ENCODE measurements at regions of chr18 and their contacts with region 1.

Region 1: DNA sequence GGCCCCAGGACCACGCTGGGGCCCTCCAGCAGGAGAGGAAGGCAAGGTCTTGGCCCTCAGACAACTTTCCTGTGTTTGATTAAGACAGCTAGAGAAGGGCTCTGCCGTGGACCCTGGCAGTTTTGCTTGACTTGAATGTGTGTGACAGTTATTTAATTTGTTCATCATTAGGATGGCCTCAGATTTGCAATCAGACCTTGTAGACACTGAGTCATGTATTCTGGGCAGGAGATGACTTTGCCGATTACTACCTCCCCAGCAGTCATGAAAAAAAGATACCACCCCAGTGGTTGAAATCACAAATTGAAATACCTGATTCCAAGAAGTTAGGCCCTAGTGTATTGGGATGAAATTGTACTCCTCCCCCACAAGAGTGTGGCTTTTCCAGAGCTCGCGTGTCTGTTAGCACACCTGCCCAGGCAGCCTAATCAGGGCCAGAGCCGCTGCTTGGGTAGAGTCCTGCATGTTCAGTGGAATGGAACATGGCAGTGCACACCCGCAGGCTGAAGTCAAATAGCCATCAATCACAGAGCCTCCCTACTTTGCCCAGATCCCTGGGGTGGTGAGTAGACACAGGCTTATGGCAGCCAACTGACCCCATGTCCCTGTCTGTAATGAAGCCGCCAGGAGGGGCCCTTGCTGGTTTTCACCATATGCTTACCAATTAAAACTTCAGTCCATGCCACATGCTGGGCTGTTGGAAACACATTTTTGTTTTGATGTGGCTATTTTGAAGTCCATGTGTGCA is 122.5 kb downstream of the TPGS2 start:
- DNase-seq: no peak
- ATAC-seq: no peak
- H3K4me3 ChIP-seq: no peak overlapping the region
- H3K27ac ChIP-seq: no peak overlapping the region
- H3K4me1 ChIP-seq: no peaks in the 10 kb centered on the region
- H3K27me3 ChIP-seq: no peaks in the 10 kb centered on the region
- CTCF ChIP-seq: no peak
- POLR2A ChIP-seq: no peak

Region 2: DNA sequence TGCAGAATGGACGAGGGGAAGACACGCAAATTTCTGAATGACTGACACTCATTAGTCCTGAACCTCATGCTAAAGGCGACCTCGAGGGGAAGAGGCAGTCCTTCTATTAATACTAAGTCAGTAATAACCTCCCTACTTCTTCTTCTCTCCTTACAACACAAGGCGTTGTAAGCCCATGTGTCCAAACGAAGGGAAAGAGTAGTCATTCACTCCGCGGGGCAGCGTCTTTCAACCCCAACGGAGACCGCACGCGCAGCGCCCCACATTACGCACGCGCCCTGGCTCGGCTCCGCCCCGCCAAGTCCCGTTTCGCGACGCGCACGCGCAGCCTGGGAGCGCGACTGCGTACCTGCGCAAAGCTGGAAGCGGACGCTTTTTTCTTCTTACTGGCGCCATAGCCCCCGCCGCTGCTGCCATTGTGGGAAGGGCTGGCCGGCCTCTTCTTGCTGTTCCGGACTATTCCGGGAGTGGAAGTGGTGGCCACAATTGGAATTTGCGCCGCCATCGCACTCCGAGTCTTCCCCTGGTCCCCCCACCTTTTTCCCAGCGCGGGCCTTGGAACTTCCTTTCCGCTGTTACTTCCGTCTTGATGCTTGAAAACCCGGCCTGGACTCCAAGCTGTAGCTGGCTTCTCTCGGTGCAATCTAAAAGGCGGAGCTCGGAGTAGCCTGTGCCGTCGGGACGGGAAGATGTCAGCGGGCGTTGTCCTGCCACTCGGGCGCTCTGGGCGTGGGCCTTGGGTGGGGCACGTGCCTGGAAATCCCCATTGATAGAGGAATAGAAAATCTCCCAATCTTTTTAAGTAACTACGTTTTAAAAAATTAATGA is 1208.7 kb before region 1 on chr18 and contains the start of gene INO80C:
- intact Hi-C with region 1: no loop called
- DNase-seq: peak; percentile 93 to 94 (median 94)
- ATAC-seq: peak; percentile 96 to 98 (median 96)
- H3K4me3 ChIP-seq: peak within 1 kb of the TSS; percentile 45 to 76 (median 70)
- H3K27ac ChIP-seq: peak within 1 kb of the TSS; percentile 90 to 95 (median 94)
- H3K4me1 ChIP-seq: peaks cover 0 to 13% (median 4%) of the 10 kb centered on the region in 4 donors
- H3K27me3 ChIP-seq: no peaks in the 10 kb centered on the region
- CTCF ChIP-seq: peak in 1 of 4 donors; percentile 13
- POLR2A ChIP-seq: peak; percentile 98
- total RNA-seq, gene INO80C: 6.4 to 12.7 (median 9.7) TPM

Region 3: DNA sequence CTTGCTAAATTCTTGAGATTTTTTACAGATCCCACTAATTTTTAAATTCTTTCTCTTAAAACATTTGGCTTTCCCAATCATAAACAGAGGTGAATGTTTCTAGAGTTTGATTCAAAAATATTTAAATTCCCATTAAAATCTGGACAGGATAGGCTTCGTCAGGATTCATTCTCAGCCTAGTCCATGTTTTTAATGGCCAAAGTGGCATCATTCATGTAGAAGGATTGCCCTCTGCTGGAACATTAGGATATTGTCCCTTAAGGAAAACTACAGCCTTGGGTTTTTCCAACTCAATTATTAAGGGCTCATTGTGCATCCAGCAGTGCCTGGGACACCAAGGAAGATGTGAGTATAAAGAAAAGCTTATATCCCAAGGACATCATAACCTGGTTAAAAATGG is 50.8 kb after region 1 on chr18:
- intact Hi-C with region 1: loop called in 1 of 2 experiments (anchors 10 kb)
- DNase-seq: no peak
- ATAC-seq: peak; percentile 82 to 90 (median 86)
- H3K4me3 ChIP-seq: no peak overlapping the region
- H3K27ac ChIP-seq: no peak overlapping the region
- H3K4me1 ChIP-seq: no peaks in the 10 kb centered on the region
- H3K27me3 ChIP-seq: no peaks in the 10 kb centered on the region
- CTCF ChIP-seq: peak; percentile 55 to 78 (median 61)
- POLR2A ChIP-seq: no peak